ENCODE measurements at regions of chr10 and their contacts with region 1.

Region 1: GRCh38 chr10:68720793-68721672 is at the start of gene CCAR1:
- DNase-seq: peak; percentile 92 to 99 (median 94)

Region 2: DNA sequence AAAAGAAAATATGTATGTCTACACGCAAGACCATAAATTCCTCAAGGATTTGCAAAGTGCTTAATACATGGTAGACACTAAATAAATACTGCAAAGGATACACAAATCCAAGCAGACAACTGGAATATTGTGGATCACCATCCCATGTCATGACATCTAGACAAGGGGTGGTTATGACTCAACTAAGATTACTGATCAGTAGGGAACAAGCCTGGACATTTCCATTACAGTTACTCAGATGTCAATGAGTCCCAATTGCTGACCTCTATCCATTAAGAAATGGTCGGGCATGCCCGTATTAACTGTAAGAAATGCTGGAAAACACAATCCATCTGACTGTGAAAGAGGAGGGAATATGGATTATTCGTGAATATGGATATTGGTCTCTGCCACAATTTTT is 286.4 kb before region 1 on chr10:
- intact Hi-C with region 1: no loop called
- DNase-seq: no peak

Region 3: GRCh38 chr10:68526626-68527307 is 194.3 kb before region 1 on chr10:
- intact Hi-C with region 1: loop called (anchors 1 kb)
- DNase-seq: no peak

Region 4: DNA sequence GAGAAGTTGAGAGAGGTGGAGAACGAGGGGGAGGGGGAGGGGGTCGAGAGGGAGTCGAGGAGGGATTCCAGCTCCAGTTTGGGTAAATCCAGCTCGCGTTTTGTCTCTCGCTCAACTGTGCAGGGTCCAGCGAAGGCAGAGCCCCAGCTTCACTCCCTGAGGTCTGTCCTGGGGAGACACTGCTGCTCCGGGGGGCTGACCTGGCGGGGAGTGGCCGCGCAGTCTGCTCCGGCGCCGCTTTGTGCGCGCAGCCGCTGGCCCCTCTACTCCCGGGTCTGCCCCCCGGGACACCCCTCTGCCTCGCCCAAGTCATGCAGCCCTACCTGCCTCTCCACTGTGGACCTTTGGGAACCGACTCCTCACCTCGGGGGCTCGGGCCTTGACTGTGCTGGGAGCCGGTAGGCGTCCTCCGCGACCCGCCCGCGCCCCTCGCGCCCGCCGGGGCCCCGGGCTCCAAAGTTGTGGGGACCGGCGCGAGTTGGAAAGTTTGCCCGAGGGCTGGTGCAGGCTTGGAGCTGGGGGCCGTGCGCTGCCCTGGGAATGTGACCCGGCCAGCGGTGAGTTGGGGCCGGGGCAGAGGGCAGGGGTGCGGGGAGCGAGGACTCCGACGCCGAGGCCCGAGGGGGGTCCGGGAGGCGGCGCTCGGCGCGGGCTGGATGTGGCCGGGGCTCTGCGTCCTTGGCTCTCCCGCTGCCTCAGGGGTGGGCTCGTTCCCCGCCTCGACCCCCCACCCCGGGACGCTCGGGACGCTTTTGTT is 160.7 kb before region 1 on chr10 and contains the start of gene TET1:
- intact Hi-C with region 1: loop called (anchors 5 kb)
- DNase-seq: peak in 6 of 10 donors; percentile 9 to 74 (median 32)

Region 5: DNA sequence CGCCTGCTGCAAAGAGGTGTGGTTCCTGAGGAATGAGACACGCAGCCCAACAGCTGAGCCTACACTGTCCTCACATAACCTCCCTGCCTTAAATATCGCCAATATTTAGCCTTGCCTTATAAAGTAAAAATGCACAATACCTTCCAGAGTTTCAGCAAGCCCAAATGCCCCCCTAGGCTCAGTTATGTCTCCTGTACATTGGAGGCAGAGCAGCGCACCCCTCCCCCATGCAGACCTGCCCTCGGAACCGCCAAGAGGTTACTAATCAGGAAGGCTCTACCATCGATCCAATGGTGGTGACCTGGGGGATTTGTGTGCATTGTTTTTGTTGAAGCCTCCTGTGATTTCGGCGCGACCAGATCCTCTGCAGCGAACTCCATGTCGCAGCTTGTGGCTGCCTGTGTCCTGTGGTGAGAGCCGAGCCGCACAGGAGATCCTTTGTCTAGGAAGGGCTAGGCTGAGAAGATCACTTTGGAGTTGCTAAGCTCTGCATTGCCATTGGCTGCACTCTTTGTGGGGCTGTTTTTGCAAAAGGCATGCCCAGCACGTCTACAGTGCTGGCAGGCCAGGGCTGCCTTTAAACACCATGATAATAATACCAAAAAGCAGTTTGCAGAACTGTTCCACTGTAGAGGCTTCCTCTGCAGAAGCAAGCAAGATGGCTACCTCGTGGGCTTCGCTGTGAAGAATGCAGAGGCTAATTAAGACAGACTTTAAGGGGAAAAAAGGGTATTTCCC is 120.8 kb before region 1 on chr10:
- intact Hi-C with region 1: loop called (anchors 1 kb)
- DNase-seq: peak; percentile 75 to 97 (median 81)

Region 6: DNA sequence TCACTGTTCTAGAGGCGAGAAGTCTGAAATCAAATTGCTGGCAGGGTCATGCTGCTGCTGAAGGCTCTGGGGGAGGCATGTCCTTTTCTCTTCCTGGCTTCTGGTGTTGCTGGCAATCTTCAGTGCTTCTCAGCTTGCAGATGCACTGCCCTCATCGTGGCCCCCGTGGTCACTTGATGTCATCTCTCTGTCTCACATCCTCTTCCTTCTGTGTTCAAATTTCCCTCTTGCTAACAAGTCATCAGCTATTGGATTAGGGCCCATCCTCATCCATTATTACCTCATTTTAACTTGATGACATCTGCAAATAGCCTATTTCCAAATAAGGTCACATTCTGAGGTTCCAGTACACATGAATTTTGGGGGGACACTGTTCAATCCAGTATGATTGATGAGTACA is 330.3 kb after region 1 on chr10:
- intact Hi-C with region 1: no loop called
- DNase-seq: peak in 2 of 10 donors; percentile 25 to 85